Left lung (tissue), 14 donors: ENCODE measurements at regions of chr15 and their contacts with region 1.

Region 1: GRCh38 chr15:101307048-101307896 is 12.2 kb upstream of the SNRPA1 start:
- DNase-seq: peak in 1 of 4 donors; percentile 19
- ATAC-seq: no peak
- H3K4me3 ChIP-seq: no peak overlapping the region
- H3K27ac ChIP-seq: no peak overlapping the region
- H3K4me1 ChIP-seq: no peaks in the 10 kb centered on the region
- H3K27me3 ChIP-seq: no peaks in the 10 kb centered on the region
- CTCF ChIP-seq: no peak

Region 2: GRCh38 chr15:101501703-101502373 is 194.6 kb after region 1 on chr15:
- intact Hi-C with region 1: loop called in 1 of 2 experiments (anchors 10 kb)
- DNase-seq: peak in 1 of 4 donors; percentile 37
- ATAC-seq: peak; percentile 87
- H3K4me3 ChIP-seq: no peak overlapping the region
- H3K27ac ChIP-seq: no peak overlapping the region
- H3K4me1 ChIP-seq: no peaks in the 10 kb centered on the region
- H3K27me3 ChIP-seq: peaks cover 0 to 39% of the 10 kb centered on the region in 2 donors
- CTCF ChIP-seq: peak; percentile 36 to 48

Region 3: DNA sequence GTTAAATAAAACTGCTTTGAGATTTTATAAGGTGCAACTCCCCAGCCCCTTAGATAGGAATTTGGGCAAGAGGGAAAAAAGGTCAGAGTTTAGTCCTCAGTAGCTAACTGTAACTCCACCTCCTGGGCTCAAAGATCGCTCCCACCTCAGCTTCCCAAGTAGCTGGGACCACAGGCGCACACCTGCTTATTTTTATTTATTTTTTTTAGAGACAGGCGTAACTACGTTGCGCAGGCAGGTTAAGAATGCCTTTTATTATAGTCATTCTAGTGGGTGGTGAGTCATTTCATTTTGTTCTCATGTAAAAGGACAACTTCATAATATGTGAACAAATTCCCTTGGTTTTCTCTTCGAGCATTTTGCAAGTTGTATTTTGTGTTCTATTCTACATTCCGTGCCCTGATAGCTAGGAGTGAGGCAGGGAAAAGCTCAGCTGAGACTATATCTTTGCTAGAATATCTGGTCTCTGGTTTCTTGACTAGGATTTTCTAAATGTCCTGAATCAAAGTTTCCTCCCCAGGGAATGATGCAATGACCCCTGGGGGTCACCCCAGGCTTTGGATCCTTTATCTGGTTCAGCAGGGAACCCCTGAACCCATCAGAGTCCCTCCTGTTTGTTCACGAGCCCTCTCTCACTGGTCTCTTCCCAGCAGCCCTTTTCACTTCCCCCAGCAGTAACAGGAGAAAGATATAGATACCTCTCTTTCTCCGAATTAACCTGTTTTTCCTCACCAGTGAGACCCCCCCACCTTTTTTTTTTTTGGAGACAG is 330.5 kb after region 1 on chr15:
- intact Hi-C with region 1: loop called in 1 of 2 experiments (anchors 5 kb)
- DNase-seq: no peak
- ATAC-seq: no peak
- H3K4me3 ChIP-seq: no peak overlapping the region
- H3K27ac ChIP-seq: no peak overlapping the region
- H3K4me1 ChIP-seq: peaks cover 5 to 23% of the 10 kb centered on the region in 2 donors
- H3K27me3 ChIP-seq: no peaks in the 10 kb centered on the region
- CTCF ChIP-seq: no peak